Activated naive CD4-positive, alpha-beta T cell treated with anti-CD3 and anti-CD28 coated beads for 36 hours (primary cell): ENCODE measurements at regions of chr19 and their contacts with region 1.

Region 1: DNA sequence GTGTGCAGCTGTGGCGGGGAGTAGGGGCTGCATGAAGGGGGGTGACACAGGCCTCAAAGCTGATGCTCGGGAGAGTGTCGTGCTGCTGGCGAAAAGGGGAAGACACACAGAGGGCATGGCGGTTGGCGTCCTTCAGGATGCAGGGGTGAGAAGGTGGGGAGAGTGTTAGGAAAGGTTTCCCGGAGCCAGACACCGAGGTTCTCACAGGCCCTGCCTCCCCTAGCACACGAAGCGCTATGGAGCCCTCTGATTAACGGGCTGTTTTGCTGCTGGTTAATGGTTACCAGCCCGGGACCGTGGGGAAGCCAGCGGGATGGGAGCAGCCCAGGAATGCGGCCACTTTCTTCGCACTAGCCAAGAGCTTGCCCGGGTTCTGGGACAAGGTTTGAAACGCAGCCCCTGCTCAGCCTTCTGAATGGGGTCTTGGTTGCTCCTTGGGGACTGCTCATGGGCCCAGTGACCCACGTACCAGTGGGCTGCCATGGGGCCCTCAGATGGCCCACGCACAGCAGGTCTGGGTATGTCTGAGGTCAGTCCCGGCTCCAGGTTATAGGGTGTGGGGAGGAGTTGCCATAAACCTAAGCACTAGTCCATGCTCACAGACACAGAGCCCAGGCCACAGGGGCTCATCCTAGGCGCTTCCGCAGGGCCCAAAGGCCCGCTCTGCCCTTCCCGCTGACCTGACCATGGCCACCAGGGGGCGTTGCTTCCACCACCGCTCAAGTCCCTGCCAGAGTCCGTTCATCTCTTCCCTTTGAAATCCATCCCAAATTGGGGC is 31.3 kb upstream of the ISYNA1 start:
- DNase-seq: peak; percentile 72
- H3K4me3 Mint-ChIP-seq: no peak overlapping the region
- H3K27ac Mint-ChIP-seq: no peak overlapping the region
- H3K4me1 Mint-ChIP-seq: peaks cover 2% of the 10 kb centered on the region
- H3K27me3 Mint-ChIP-seq: no peaks in the 10 kb centered on the region

Region 2: GRCh38 chr19:18450931-18451845 is 18.1 kb before region 1 on chr19:
- CTCF ChIA-PET with region 1: interaction called, 60 read pairs
- intact Hi-C with region 1: no loop called
- DNase-seq: peak; percentile 93
- H3K4me3 Mint-ChIP-seq: no peak overlapping the region
- H3K27ac Mint-ChIP-seq: no peak overlapping the region
- H3K4me1 Mint-ChIP-seq: no peaks in the 10 kb centered on the region
- H3K27me3 Mint-ChIP-seq: no peaks in the 10 kb centered on the region

Region 3: GRCh38 chr19:18542936-18543815 is 73.9 kb after region 1 on chr19 and contains the start of gene FKBP8:
- CTCF ChIA-PET with region 1: no interaction called
- intact Hi-C with region 1: no loop called
- DNase-seq: peak; percentile 97
- H3K4me3 Mint-ChIP-seq: peak within 1 kb of the TSS; percentile 88
- H3K27ac Mint-ChIP-seq: peak within 1 kb of the TSS; percentile 95
- H3K4me1 Mint-ChIP-seq: peaks cover 21% of the 10 kb centered on the region
- H3K27me3 Mint-ChIP-seq: no peaks in the 10 kb centered on the region
- total RNA-seq, gene FKBP8: 161 to 163 TPM

Region 4: DNA sequence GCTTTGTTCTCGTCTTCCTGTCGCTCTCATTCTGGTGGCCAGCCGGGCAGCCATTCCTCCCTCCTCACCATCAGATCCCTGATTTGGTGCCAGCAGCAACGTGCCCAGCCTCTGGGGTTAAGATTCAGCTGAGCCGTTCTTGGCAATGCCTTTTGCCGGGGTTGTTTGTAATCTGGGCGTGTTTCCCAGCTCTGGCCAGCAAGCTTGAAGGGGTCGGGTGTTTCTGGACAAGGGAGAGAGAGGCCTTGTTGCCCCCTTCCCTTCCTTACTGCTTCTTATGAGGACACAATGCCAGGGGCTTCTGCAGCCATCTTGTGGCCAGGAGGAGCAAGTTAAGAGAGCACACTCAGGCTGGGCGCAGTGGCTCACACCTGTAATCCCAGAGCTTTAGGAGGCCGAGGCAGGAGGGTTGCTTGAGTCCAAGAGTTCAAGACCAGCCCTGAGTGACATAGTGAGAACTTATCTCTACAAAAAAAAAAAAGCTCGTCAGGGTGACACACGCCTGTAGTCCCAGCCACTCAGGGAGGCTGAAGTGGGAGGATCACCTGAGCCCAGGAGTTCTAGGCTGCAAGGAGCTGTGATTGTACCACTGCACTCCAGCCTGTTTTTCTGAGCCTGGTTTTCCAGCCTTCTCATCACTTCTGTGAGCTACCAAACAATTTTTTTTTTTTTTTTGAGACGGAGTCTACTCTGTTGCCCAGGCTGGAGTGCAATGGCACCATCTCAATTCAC is 203.5 kb after region 1 on chr19:
- CTCF ChIA-PET with region 1: interaction called, 5 read pairs
- intact Hi-C with region 1: loop called (anchors 5 kb)
- DNase-seq: no peak
- H3K4me3 Mint-ChIP-seq: no peak overlapping the region
- H3K27ac Mint-ChIP-seq: no peak overlapping the region
- H3K4me1 Mint-ChIP-seq: no peaks in the 10 kb centered on the region
- H3K27me3 Mint-ChIP-seq: no peaks in the 10 kb centered on the region

Region 5: DNA sequence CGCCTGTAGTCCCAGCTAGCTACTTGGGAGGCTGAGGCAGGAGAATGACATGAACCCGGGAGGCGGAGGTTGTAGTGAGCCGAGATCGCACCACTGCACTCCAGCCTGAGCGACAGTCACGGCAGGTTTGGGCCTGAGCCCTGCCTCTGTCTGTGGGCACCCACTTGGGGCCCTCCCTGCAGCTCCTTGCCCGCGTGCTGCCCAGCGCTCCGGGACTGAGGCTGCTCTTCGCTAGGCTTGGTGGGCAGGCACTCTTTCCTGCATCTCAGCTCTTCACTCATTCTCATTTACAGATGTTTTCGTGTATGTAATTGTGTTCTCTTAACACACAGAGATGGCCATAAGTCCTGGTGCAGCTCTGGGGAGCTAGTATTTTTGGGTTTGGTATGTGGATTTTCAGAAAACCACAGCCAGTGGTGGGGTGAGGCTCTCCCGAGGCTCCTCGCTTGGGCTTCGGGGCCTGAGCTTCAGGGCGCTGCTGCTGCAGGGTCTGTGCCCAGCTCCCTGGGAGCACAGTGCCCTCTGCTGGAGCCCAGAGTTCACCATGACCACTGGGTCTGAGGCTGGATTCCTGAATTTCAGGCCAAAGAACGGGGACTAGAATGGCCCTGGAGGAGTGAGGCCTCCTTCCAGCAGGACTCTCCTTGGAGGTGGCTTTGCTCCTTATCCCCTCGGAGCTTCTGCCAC is 377.7 kb after region 1 on chr19:
- CTCF ChIA-PET with region 1: interaction called, 3 read pairs
- intact Hi-C with region 1: loop called (anchors 5 kb)
- DNase-seq: peak; percentile 79
- H3K4me3 Mint-ChIP-seq: no peak overlapping the region
- H3K27ac Mint-ChIP-seq: no peak overlapping the region
- H3K4me1 Mint-ChIP-seq: peaks cover 46% of the 10 kb centered on the region
- H3K27me3 Mint-ChIP-seq: no peaks in the 10 kb centered on the region